Activated CD8-positive, alpha-beta memory T cell treated with anti-CD3 and anti-CD28 coated beads, Interleukin-2, amount 10 ng/mL, durations not matched to agents 7 days and 5 days (primary cell): ENCODE measurements at regions of chr17 and their contacts with region 1.

Region 1: GRCh38 chr17:60036796-60037612 is 41.7 kb downstream of the HEATR6 start:
- DNase-seq: peak; percentile 79
- ATAC-seq: peak; percentile 95
- H3K4me3 Mint-ChIP-seq: no peak overlapping the region
- H3K27ac Mint-ChIP-seq: peak overlapping the region; percentile 43
- H3K4me1 Mint-ChIP-seq: peaks cover 9% of the 10 kb centered on the region
- H3K27me3 Mint-ChIP-seq: peaks cover 21% of the 10 kb centered on the region

Region 2: GRCh38 chr17:59746849-59747445 is 290.1 kb before region 1 on chr17:
- CTCF ChIA-PET with region 1: interaction called, 27 read pairs
- DNase-seq: no peak
- ATAC-seq: peak; percentile 52
- H3K4me3 Mint-ChIP-seq: no peak overlapping the region
- H3K27ac Mint-ChIP-seq: peak overlapping the region; percentile 37
- H3K4me1 Mint-ChIP-seq: peaks cover 20% of the 10 kb centered on the region
- H3K27me3 Mint-ChIP-seq: no peaks in the 10 kb centered on the region

Region 3: GRCh38 chr17:59859444-59860025 is 177.5 kb before region 1 on chr17:
- CTCF ChIA-PET with region 1: interaction called, 14 read pairs
- DNase-seq: no peak
- ATAC-seq: no peak
- H3K4me3 Mint-ChIP-seq: no peak overlapping the region
- H3K27ac Mint-ChIP-seq: no peak overlapping the region
- H3K4me1 Mint-ChIP-seq: peaks cover 20% of the 10 kb centered on the region
- H3K27me3 Mint-ChIP-seq: no peaks in the 10 kb centered on the region

Region 4: GRCh38 chr17:59914274-59914854 is 122.6 kb before region 1 on chr17:
- CTCF ChIA-PET with region 1: interaction called, 25 read pairs
- DNase-seq: no peak
- ATAC-seq: peak; percentile 64
- H3K4me3 Mint-ChIP-seq: no peak overlapping the region
- H3K27ac Mint-ChIP-seq: no peak overlapping the region
- H3K4me1 Mint-ChIP-seq: no peaks in the 10 kb centered on the region
- H3K27me3 Mint-ChIP-seq: no peaks in the 10 kb centered on the region